ENCODE measurements at regions of chr17 and their contacts with region 1.

Region 1: DNA sequence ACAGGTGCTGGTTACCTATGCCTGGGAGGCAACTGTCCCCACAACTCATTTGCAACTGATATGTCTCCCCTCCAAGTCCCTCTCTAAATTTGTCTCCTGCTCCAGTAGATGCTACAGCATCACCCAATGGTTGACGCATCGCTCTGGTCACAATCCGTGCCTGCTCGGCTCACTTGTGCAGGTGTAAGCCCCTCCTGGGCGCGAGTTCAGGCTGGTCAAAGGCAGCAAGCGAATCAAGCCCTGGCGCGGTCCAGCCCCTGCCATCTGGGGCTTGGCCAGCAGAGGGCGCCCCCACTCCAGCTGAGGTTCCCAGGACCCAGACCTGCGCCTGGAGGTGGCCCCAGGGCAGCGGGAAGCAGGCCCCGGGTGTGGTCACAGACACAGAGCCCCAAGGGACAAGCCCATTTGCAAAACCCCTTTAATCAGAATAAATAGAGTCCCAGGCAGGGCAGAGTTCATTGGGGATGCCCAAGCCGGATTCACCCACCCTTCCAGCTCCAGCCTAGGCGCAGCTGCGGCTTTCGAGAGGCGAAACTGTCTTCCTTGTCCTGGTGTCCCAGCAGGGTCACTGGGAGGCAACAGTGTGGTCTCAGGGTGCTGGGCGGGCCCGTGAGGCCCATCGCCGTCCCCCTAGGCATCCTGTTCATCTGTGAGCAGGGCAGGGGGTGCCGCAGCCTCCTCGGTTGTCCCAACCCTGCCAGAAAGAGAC is 15.9 kb downstream of the TMC6 start:
- DNase-seq: peak; percentile 64 to 100
- H3K4me3 ChIP-seq: no peak overlapping the region
- H3K27ac ChIP-seq: no peak overlapping the region
- H3K4me1 ChIP-seq: no peaks in the 10 kb centered on the region; a peak in 1 of 7 replicates
- H3K27me3 ChIP-seq: no peaks in the 10 kb centered on the region
- CTCF ChIP-seq: peak; percentile 95 to 99 (median 98)
- EP300 ChIP-seq: 0 out of 3 replicates have a peak, but pooled peaks of 1 of the 2 experiments have one; percentile 7
- POLR2A ChIP-seq: peak in 1 of 2 experiments; percentile 29; a peak in 1 of 3 replicates
- RAD21 ChIP-seq: peak; percentile 95 to 98

Region 2: GRCh38 chr17:77892469-77893143 is 220.1 kb before region 1 on chr17:
- CTCF ChIA-PET with region 1: no interaction called
- POLR2A ChIA-PET with region 1: no interaction called
- DNase-seq: peak; percentile 41 to 92
- H3K4me3 ChIP-seq: no peak overlapping the region
- H3K27ac ChIP-seq: no peak overlapping the region
- H3K4me1 ChIP-seq: peaks cover 0 to 8% (median 2%) of the 10 kb centered on the region in 4 experiments; a peak in 5 of 7 replicates
- H3K27me3 ChIP-seq: peaks cover 3 to 20% (median 10%) of the 10 kb centered on the region in 4 experiments; a peak in 6 of 7 replicates
- CTCF ChIP-seq: peak; percentile 83 to 95 (median 86)
- EP300 ChIP-seq: no peak
- POLR2A ChIP-seq: no peak
- RAD21 ChIP-seq: peak; percentile 72 to 84

Region 3: DNA sequence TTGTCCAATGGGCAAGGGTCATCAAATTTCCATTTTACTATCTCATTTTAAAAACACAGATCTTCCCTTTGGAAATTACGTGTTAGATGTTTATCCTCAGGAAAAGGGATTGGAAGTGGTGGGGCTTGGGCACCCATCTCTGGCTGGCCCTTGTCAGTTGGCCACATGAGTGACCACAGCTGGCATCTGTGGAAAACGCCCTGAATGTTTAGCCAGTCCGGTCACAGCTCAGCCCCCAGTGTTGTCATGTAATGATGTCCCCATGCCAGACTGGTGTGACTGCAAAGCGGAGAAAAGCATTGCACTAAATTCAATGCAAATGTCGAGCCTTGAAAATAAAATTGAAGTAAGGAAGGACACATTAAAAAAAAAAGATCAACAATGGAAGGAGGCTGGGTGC is 37.1 kb before region 1 on chr17:
- CTCF ChIA-PET with region 1: no interaction called
- POLR2A ChIA-PET with region 1: no interaction called
- DNase-seq: no peak
- H3K4me3 ChIP-seq: no peak overlapping the region
- H3K27ac ChIP-seq: no peak overlapping the region
- H3K4me1 ChIP-seq: no peaks in the 10 kb centered on the region
- H3K27me3 ChIP-seq: no peaks in the 10 kb centered on the region
- CTCF ChIP-seq: no peak
- EP300 ChIP-seq: no peak
- POLR2A ChIP-seq: no peak
- RAD21 ChIP-seq: no peak

Region 4: DNA sequence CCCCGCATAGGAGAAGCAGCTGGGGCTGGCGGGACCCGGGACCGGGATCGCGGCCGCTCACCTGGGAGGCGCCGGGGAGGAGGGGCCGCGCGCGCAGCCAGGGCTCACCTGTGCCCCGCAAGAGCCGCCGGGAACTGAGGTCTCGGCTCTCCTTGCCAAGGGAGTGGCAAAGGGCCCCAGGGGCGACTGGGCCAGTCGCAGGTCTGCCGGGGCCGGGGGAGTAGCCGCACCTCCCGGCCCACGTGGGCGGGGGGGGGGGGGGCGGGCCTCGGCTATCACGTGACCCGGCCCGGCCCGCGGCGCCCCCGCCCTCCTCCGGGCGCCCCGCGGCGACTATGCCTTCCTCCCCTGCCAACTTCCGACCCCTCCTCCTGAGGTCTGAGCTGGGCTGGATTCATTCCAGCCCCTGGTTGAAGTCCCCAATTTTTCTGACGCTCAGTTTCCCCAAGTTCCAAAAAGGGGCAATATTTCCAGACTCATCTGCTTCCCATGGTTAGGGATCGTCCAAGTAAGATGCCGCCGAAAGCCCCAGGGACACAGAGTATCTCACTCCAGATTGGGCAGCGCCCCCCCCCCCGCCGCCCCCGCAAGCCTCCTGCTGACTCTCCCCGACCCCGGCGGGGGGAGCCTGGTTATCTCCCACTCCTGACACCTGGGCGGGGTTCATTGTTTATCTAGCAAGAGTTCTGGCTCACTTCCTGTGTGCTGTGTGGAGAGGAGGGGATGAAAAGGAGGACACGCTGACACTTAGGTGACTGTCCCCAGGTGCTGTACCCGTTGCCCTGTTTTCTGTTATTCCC is 16.1 kb after region 1 on chr17 and contains the start of gene TMC6:
- CTCF ChIA-PET with region 1: interaction called, 122 read pairs
- POLR2A ChIA-PET with region 1: interaction called, 16 read pairs
- DNase-seq: peak in 1 of 2 experiments; percentile 89
- H3K4me3 ChIP-seq: peak within 1 kb of the TSS; percentile 62 to 94 (median 70)
- H3K27ac ChIP-seq: no peak within 1 kb of the TSS; the same call in 1 of the 2 replicates
- H3K4me1 ChIP-seq: peaks cover 0 to 27% (median 17%) of the 10 kb centered on the region in 4 experiments; a peak in 6 of 7 replicates
- H3K27me3 ChIP-seq: peaks cover 0 to 23% (median 14%) of the 10 kb centered on the region in 4 experiments; a peak in 5 of 7 replicates
- CTCF ChIP-seq: no peak
- EP300 ChIP-seq: no peak
- POLR2A ChIP-seq: 0 out of 3 replicates have a peak, but pooled peaks of 1 of the 2 experiments have one; percentile 59
- RAD21 ChIP-seq: no peak
- total RNA-seq, gene TMC6: 73.1 and 77.6 TPM in 2 replicates

Region 5: DNA sequence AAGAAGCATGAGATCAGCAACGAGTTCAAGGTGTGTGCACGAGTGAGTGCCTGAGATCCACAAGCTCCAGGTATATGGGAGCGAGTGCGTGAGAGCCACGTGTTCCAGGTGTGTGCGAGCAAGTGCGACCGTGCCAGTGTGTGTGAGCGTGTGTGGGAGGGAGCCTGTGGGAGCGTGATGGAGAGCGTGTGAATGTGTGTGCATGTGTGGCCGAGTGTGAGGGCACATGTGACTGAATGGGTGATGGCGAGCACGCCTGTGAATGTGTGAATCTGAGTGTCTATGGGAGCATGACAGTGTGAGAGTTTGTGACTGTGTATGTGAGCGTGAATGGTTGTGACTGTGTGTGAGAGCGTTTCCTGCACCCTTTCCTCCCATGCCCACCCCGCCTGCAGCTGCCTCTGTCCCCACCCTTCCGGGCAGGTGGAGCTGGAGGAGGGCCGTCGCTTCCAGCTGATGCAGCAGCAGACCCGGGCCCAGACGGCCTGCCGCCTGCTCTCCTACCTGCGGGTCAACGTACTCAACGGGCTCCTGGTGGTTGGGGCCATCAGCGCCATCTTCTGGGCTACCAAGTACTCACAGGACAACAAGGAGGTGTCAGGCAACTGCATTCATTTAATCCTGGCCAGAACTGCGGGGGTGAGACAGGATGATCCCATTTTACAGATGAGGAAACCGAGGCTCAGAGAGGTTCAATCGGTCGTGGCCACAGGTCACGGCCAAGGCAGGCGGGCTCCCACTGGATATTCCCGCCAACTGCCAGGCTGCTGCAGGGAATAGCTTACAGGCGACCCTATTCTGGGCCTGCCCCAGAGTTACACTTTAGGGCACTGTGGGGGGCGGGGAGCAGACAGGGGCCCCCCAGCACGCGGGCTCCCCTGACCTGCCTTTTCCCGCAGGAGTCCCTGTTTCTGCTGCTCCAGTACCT is 21.6 kb after region 1 on chr17:
- CTCF ChIA-PET with region 1: interaction called, 122 read pairs
- POLR2A ChIA-PET with region 1: interaction called, 16 read pairs
- DNase-seq: peak; percentile 72 to 87
- H3K4me3 ChIP-seq: no peak overlapping the region; a peak in 1 of 8 replicates
- H3K27ac ChIP-seq: no peak overlapping the region
- H3K4me1 ChIP-seq: peaks cover 0 to 22% (median 7%) of the 10 kb centered on the region in 4 experiments; a peak in 5 of 7 replicates
- H3K27me3 ChIP-seq: peaks cover 0 to 26% (median 17%) of the 10 kb centered on the region in 4 experiments; a peak in 5 of 7 replicates
- CTCF ChIP-seq: peak; percentile 87 to 95 (median 90)
- EP300 ChIP-seq: no peak
- POLR2A ChIP-seq: no peak
- RAD21 ChIP-seq: peak; percentile 65 to 82

Region 6: GRCh38 chr17:78176548-78177025 is 63.9 kb after region 1 on chr17:
- CTCF ChIA-PET with region 1: interaction called, 11 read pairs
- POLR2A ChIA-PET with region 1: interaction called, 4 read pairs
- DNase-seq: peak in 1 of 2 experiments; percentile 92
- H3K4me3 ChIP-seq: no peak overlapping the region
- H3K27ac ChIP-seq: no peak overlapping the region
- H3K4me1 ChIP-seq: peaks cover 5 to 17% (median 7%) of the 10 kb centered on the region in 4 experiments
- H3K27me3 ChIP-seq: no peaks in the 10 kb centered on the region
- CTCF ChIP-seq: peak; percentile 89 to 99 (median 94)
- EP300 ChIP-seq: no peak
- POLR2A ChIP-seq: peak in 1 of 2 experiments; percentile 49; a peak in 1 of 3 replicates
- RAD21 ChIP-seq: peak; percentile 48 to 70

Region 7: GRCh38 chr17:78341559-78342448 is 229.1 kb after region 1 on chr17:
- CTCF ChIA-PET with region 1: no interaction called
- POLR2A ChIA-PET with region 1: no interaction called
- DNase-seq: peak in 1 of 2 experiments; percentile 80
- H3K4me3 ChIP-seq: peak overlapping the region; percentile 29 to 61 (median 32); a peak in 6 of 8 replicates
- H3K27ac ChIP-seq: no peak overlapping the region
- H3K4me1 ChIP-seq: peaks cover 0 to 17% (median 14%) of the 10 kb centered on the region in 4 experiments; a peak in 5 of 7 replicates
- H3K27me3 ChIP-seq: peaks cover 0 to 23% (median 13%) of the 10 kb centered on the region in 4 experiments; a peak in 5 of 7 replicates
- CTCF ChIP-seq: no peak
- EP300 ChIP-seq: no peak
- POLR2A ChIP-seq: no peak
- RAD21 ChIP-seq: no peak